Activated CD4-positive, alpha-beta T cell treated with anti-CD3 and anti-CD28 coated beads, Interleukin-2, amount 10 ng/mL, durations not matched to agents 24 days and 14 days (primary cell): ENCODE measurements at regions of chr2 and their contacts with region 1.

Region 1: DNA sequence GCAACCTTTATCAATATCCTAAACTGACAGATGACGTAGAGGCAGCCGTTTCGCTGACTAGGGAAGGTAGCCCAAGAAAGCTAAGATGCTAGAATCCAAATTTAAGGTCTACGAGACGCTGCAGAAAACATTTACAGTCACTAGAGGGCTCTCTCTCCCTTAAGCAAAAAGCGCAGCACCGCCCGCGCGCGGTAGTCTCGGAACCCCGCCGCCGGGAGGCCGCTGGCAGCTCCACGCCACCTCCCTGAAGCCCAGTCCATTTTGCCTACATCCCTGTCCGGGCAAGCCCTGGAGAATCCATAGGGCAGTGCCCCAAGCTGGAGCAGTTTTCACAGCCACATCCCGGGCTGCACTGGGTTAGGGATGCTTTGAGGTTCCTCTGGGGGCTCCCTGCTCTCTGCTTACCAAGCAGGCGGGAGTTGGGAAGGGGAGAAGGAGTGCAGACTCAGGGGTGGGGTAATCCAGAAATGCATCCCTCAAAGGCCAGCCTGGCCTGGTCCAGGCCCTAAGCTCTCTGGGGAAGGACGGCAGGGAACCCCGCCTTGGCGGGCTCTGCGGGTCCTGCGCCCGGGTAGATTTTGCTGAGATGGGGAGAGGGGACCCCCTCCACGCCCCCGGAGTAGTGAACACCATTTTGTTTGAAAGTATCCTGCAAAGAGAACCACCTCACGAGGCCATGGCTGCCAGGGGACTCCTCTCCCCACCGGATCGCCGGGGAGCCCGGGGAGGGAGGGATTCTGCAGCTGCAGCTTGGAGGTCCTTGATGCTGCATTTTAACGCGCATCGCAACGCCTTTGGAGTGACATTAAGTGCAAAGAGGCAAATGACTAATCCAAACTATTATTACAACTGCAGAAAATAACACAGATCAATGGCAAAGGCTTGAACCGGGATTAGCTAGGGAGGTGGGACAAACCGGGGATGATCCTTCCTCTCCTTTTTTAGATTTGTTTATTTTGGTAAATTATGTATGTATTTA is 1.3 kb upstream of the DPYSL5 start:
- DNase-seq: peak; percentile 88
- H3K4me3 Mint-ChIP-seq: peak overlapping the region; percentile 51
- H3K27ac Mint-ChIP-seq: no peak overlapping the region
- H3K4me1 Mint-ChIP-seq: peaks cover 5% of the 10 kb centered on the region
- H3K27me3 Mint-ChIP-seq: peaks cover 55% of the 10 kb centered on the region

Region 2: DNA sequence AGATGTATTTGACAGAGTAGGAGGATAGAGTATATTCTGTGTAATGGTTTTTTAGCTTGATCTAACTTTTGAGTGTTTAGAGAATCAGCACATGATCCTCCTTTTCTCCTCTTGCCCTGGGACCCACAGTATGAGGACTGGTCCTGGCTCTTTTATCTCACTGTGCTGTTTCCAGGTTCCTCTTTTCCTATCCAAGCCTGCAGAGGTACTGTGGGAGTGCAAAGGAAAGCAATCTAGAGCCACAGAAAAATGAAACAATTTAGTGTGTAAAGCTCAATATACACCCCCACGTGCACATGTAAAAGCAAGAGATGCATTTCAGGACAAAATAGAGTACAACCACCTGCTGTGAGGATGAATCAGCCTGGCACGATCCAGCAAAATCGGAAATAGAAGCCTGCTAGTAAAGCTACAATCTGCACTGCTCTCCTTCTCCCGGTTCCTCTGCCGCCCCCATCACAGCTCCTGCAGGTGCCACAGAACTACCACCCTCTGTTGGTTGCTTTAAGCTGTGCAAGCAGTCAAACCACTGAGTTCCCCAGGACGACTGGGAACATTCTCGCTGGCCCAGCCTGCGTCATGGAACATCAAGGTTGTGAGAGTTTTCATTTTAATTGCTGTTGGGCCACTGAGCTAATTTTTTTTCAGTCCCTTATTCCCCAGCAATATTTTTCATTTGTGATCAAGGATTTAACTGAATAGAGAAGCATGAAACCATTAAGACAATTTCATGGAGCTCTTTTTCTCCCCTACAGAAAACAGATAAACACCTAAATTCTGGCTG is 76.0 kb after region 1 on chr2:
- intact Hi-C with region 1: loop called (anchors 1 kb)
- DNase-seq: peak; percentile 72
- H3K4me3 Mint-ChIP-seq: no peak overlapping the region
- H3K27ac Mint-ChIP-seq: no peak overlapping the region
- H3K4me1 Mint-ChIP-seq: peaks cover 2% of the 10 kb centered on the region
- H3K27me3 Mint-ChIP-seq: peaks cover 16% of the 10 kb centered on the region

Region 3: GRCh38 chr2:26942543-26943295 is 96.1 kb after region 1 on chr2:
- intact Hi-C with region 1: loop called (anchors 1 kb)
- DNase-seq: peak; percentile 88
- H3K4me3 Mint-ChIP-seq: no peak overlapping the region
- H3K27ac Mint-ChIP-seq: no peak overlapping the region
- H3K4me1 Mint-ChIP-seq: no peaks in the 10 kb centered on the region
- H3K27me3 Mint-ChIP-seq: peaks cover 6% of the 10 kb centered on the region

Region 4: DNA sequence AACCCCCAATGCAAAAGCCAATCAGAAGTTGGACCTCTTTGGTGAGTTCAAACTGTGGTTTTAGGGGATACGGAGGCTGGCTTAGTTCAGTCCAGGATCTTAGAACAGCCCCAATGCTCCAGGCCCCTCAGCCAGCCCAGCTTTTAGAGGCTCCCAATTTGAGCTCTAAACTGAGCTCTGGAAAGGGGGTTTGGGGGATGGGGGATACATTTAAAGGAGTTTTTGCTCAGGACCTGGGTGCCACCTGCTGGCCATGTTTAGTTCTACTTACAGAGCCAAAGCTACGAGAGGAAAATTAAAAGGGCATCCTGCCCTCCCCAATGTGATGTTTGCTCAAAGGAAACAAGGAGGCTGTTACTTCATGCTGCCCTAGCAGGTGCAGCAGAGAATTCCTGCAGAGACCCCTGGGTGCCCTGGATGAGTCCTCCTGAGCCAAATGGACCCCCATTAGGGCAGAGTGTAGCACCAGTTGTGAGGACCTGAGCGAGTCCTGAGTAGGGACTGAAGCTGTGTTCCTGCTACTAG is 170.2 kb after region 1 on chr2:
- intact Hi-C with region 1: loop called (anchors 2 kb)
- DNase-seq: peak; percentile 81
- H3K4me3 Mint-ChIP-seq: no peak overlapping the region
- H3K27ac Mint-ChIP-seq: no peak overlapping the region
- H3K4me1 Mint-ChIP-seq: peaks cover 5% of the 10 kb centered on the region
- H3K27me3 Mint-ChIP-seq: no peaks in the 10 kb centered on the region

Region 5: GRCh38 chr2:27185331-27186026 is 338.9 kb after region 1 on chr2:
- intact Hi-C with region 1: loop called (anchors 10 kb)
- DNase-seq: no peak
- H3K4me3 Mint-ChIP-seq: no peak overlapping the region
- H3K27ac Mint-ChIP-seq: no peak overlapping the region
- H3K4me1 Mint-ChIP-seq: peaks cover 2% of the 10 kb centered on the region
- H3K27me3 Mint-ChIP-seq: peaks cover 31% of the 10 kb centered on the region

Region 6: GRCh38 chr2:27264753-27265535 is 418.3 kb after region 1 on chr2:
- intact Hi-C with region 1: loop called (anchors 5 kb)
- DNase-seq: peak; percentile 83
- H3K4me3 Mint-ChIP-seq: peak overlapping the region; percentile 74
- H3K27ac Mint-ChIP-seq: no peak overlapping the region
- H3K4me1 Mint-ChIP-seq: peaks cover 25% of the 10 kb centered on the region
- H3K27me3 Mint-ChIP-seq: peaks cover 44% of the 10 kb centered on the region